ENCODE measurements at regions of chr13 and their contacts with region 1.

Region 1: GRCh38 chr13:60642552-60642951 is 245.5 kb downstream of the TDRD3 start:
- DNase-seq: no peak
- H3K4me3 ChIP-seq: no peak overlapping the region
- H3K27ac ChIP-seq: no peak overlapping the region
- H3K4me1 ChIP-seq: no peaks in the 10 kb centered on the region
- H3K27me3 ChIP-seq: no peaks in the 10 kb centered on the region
- CTCF ChIP-seq: no peak

Region 2: DNA sequence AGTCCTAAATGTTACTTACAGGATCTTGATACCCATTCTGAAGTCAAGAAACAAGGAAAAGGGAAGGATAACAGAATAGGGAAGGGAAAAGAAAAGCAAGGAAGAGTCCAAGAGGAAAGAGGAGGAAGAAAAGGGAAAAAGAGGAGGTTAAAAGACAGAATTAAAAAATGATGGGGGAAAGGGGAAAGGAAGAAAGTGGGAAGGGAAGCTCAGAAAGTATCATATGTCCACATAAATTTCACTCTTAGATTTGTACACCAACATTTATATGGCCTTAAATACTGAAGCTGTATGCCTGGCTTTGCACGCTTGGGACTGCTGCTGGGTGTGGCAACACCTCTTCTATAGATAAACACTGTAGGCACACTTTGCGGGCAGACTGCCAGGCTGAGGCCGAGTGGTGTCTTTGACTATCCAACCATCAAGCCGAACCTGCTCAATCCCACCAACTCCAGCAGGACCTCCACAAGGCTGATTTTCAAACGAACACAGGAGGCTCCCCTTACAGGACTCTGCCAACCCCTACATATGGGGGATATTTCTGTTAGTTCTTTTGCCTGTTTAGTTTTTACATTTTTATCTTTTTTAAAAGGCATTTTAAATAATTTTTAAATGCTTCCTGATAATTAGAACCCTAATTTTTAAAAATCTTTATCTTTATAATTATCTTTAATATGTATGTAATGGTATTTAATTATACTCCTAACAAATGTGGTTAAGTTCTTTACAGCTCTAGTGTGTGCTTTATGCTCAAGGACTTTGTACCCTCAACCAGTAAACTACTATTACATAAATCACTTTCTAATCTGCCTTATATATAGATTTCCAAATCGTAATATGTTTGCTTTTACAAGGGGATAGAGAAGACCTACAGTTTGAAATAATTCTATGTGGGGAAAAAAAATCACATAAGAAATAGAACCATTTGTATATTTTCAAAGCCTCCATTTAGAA is 633.0 kb before region 1 on chr13:
- CTCF ChIA-PET with region 1: no interaction called
- dilution Hi-C with region 1: no loop called
- in situ Hi-C with region 1: no loop called
- intact Hi-C with region 1: no loop called
- DNase-seq: no peak
- H3K4me3 ChIP-seq: no peak overlapping the region
- H3K27ac ChIP-seq: no peak overlapping the region
- H3K4me1 ChIP-seq: peaks cover 15% of the 10 kb centered on the region
- H3K27me3 ChIP-seq: no peaks in the 10 kb centered on the region
- CTCF ChIP-seq: no peak

Region 3: DNA sequence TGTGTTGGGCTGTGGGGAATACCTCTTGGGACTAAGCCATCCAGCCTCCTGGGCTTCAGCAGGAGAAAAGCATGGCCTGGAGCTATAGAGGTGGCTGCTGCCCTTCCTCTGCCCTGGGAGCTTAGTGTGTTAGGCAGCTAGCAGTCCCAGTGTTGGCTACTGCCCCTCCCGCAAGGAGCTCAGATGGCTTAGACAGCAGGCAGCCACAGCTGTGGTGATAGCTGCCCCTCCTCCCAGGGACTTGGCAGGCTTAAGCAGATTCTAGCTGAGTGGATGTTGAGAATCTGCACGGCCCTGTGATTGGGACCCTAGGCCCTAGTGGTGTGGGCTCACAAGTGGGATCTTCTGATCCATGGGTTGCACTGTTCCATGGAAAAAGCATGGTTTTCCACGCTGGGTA is 19.0 kb after region 1 on chr13:
- CTCF ChIA-PET with region 1: interaction called, 15 read pairs
- dilution Hi-C with region 1: no loop called
- in situ Hi-C with region 1: no loop called
- intact Hi-C with region 1: no loop called
- DNase-seq: no peak
- H3K4me3 ChIP-seq: no peak overlapping the region
- H3K27ac ChIP-seq: no peak overlapping the region
- H3K4me1 ChIP-seq: no peaks in the 10 kb centered on the region
- H3K27me3 ChIP-seq: peaks cover 2% of the 10 kb centered on the region
- CTCF ChIP-seq: no peak

Region 4: DNA sequence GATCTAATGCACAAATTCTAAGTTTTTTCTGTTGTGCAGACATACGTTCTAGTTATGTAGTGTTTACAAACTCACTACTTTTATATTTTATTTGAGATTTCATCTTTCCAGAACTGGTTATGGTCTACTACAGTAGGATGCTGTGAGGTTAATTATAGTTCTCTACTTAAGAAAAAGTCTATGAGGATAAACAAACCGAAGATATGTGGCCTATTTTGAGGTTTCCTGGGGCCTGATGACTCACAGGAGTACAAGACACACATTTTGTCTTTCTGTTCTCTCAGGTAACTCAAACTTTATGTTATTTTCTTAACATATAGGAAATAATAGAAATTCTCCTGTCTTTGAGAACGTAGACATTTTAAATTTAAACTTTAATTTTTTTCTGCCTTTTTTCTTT is 728.0 kb after region 1 on chr13:
- CTCF ChIA-PET with region 1: no interaction called
- dilution Hi-C with region 1: no loop called
- in situ Hi-C with region 1: no loop called
- intact Hi-C with region 1: no loop called
- DNase-seq: no peak
- H3K4me3 ChIP-seq: no peak overlapping the region
- H3K27ac ChIP-seq: no peak overlapping the region
- H3K4me1 ChIP-seq: no peaks in the 10 kb centered on the region
- H3K27me3 ChIP-seq: no peaks in the 10 kb centered on the region
- CTCF ChIP-seq: no peak

Measured in mammary epithelial cell (primary cell).